Lower leg skin (tissue), 4 donors: ENCODE measurements at regions of chr2 and their contacts with region 1.

Region 1: GRCh38 chr2:46470114-46470628 is 9.2 kb upstream of the TMEM247 start:
- DNase-seq: no peak
- H3K4me3 ChIP-seq: no peak overlapping the region
- CTCF ChIP-seq: no peak
- POLR2A ChIP-seq: no peak

Region 2: GRCh38 chr2:46294176-46294836 is 175.9 kb before region 1 on chr2:
- intact Hi-C with region 1: no loop called
- DNase-seq: peak in 1 of 2 donors; percentile 81
- H3K4me3 ChIP-seq: no peak overlapping the region
- CTCF ChIP-seq: no peak
- POLR2A ChIP-seq: no peak

Region 3: GRCh38 chr2:46335391-46336282 is 134.5 kb before region 1 on chr2:
- intact Hi-C with region 1: no loop called
- DNase-seq: peak in 1 of 2 donors; percentile 88
- H3K4me3 ChIP-seq: no peak overlapping the region
- CTCF ChIP-seq: no peak
- POLR2A ChIP-seq: no peak

Region 4: DNA sequence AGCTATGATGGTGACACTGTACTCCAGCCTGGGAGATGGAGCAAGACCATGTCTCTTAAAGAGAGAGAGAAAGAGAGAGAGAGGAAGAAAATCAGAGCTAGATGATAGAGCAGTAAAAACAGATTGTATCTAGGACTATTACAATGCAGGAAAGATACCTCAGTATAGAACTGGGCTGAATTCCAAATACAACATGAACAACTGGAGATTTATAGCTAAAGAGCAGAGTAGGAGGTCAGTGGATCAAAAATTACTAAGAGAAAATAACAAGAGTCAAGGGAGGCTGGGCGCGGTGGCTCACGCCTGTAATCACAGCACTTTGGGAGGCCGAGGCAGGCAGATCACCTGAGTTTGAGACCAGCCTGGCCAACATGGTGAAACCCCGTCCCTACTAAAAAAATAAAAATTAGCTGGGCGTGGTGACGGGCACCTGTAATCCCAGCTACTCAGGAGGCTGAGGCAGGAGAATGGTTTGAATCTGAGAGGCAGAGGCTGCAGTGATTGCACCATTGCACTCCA is 1212.1 kb after region 1 on chr2:
- intact Hi-C with region 1: loop called (anchors 5 kb)
- DNase-seq: peak in 1 of 2 donors; percentile 52
- H3K4me3 ChIP-seq: no peak overlapping the region
- CTCF ChIP-seq: no peak
- POLR2A ChIP-seq: no peak